IMR-90 (cell line): ENCODE measurements at regions of chr7 and their contacts with region 1.

Region 1: GRCh38 chr7:32506266-32507054 is 11.2 kb downstream of the AVL9 start:
- DNase-seq: peak; percentile 90
- ATAC-seq: peak; percentile 84
- H3K4me3 ChIP-seq: no peak overlapping the region; the same call in 1 of the 2 replicates
- H3K27ac ChIP-seq: peak overlapping the region; percentile 11; the same call in 1 of the 2 replicates
- H3K4me1 ChIP-seq: peaks cover 3% of the 10 kb centered on the region
- H3K27me3 ChIP-seq: no peaks in the 10 kb centered on the region
- CTCF ChIP-seq: no peak
- POLR2A ChIP-seq: no peak
- RAD21 ChIP-seq: no peak

Region 2: DNA sequence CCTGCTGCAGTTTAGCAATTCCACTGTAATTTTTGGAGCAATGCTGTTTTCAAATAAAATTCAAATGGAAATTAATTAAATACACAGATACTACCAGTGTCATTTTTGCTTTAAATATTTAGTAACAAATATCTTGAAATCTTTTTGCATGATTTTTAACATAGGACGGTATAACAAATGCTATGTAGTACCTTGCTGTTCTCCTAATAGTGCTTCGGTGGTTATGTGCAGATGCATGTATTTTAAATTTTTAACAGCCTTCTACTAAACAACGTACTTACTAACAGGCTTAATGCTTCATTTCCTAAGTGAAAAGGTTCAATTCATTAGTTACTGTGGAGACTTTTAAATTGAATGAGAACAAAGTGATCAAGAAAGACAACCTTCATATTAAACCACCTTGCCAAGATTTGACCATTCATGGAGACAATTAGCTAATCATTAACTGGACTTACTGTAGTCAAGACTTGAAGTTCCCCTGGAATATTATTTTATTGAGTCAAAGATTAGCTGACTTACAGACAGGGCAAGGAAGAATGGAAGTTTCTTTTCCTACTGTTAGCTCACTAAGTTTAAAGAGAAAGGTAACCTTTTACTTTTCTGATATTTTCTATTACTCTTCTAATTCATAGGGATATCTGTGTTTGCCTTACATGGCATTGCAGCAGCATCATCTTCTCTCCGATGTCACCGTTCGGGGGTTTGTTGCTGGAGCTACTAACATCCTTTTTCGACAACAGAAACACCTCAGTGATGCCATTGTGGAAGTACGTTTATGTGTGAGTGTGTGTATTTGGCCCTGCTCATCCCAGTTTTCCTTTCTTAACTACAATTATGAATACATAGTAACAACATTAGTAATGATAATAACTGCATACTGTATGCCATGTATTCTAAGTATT is 63.2 kb after region 1 on chr7:
- CTCF ChIA-PET with region 1: no interaction called
- POLR2A ChIA-PET with region 1: no interaction called
- dilution Hi-C with region 1: no loop called
- in situ Hi-C with region 1: no loop called
- intact Hi-C with region 1: loop called (anchors 5 kb)
- DNase-seq: no peak
- ATAC-seq: no peak
- H3K4me3 ChIP-seq: no peak overlapping the region
- H3K27ac ChIP-seq: no peak overlapping the region
- H3K4me1 ChIP-seq: no peaks in the 10 kb centered on the region
- H3K27me3 ChIP-seq: no peaks in the 10 kb centered on the region
- CTCF ChIP-seq: no peak
- POLR2A ChIP-seq: no peak
- RAD21 ChIP-seq: no peak